ENCODE measurements at regions of chr2 and their contacts with region 1.

Region 1: DNA sequence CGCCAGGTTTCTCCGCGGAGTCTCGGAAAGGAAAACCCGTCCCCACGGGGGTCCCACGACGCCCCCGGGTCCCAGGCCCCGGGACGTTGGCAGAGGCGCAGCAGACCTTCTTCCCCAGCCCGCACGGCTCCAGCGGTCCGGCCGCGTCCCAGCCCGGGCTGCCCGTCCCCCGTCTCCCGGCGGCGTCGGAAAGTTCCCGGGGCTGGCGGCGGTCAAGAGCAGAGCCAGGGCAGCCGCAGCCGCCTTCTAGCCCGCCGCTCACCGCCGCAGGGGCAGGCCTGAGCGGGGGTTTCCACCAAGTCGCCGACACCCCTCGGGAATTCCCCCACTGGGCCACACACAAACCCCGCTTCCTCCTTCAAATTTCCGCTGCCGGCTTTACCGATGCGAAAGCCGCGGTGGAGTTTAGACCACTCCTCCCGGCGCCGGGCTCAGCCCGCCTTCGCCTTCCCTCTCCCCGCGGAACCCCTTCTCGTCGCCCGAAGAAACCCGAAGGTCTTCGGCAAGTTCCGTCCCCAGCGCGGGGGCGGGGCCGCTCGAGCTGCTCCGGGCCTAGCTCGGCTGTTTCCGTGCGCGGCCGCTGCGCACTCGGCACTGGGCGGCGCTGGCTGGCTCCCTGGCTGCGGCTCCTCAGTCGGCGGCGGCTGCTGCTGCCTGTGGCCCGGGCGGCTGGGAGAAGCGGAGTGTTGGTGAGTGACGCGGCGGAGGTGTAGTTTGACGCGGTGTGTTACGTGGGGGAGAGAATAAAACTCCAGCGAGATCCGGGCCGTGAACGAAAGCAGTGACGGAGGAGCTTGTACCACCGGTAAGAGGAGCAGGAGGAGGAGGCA is at the start of gene CREB1:
- DNase-seq: peak; percentile 99 to 100 (median 100)
- H3K4me3 ChIP-seq: peak within 1 kb of the TSS; percentile 86 to 89
- H3K4me3 Mint-ChIP-seq: peak within 1 kb of the TSS; percentile 96 to 99 (median 98)
- H3K27ac ChIP-seq: peak within 1 kb of the TSS; percentile 99
- H3K27ac Mint-ChIP-seq: peak within 1 kb of the TSS; percentile 98 to 100 (median 100)
- H3K4me1 ChIP-seq: peaks cover 75% of the 10 kb centered on the region
- H3K4me1 Mint-ChIP-seq: peaks cover 47 to 94% (median 59%) of the 10 kb centered on the region in 4 donors
- H3K27me3 ChIP-seq: no peaks in the 10 kb centered on the region
- H3K27me3 Mint-ChIP-seq: peaks cover 0 to 3% of the 10 kb centered on the region in 2 donors
- total RNA-seq, gene CREB1: 128 TPM

Region 2: DNA sequence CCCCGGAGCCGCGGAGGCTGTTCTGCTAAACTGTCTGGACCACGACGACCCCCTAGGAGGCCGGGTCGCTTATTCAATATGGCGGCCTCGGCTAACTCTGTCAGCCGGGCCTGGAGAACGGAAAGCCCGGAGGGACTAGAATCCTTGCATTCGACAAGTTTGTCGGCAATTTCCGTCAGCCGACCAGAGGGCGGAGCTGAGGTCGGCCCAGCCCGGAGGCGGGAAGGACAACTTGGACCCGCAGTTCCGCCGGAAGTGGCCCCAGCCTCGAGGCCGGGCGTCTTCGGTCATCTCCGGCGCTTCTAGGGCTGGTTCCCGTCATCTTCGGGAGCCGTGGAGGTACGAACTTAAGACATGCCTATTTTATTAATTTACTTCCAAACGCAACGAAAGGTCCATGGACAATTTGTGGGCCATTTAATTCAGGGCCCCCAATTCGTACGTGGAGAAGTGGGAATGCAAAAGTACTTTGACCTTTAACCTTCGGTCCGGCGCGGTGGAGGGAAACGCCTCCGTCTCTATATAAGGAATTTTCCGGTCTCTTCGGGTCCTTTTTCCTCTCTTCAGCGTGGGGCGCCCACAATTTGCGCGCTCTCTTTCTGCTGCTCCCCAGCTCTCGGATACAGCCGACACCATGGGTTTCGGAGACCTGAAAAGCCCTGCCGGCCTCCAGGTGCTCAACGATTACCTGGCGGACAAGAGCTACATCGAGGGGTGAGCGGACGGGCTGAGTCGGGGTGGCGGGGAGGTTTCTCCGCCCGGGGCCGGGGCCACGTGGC is 1370.0 kb before region 1 on chr2 and contains the starts of genes EEF1B2 and NDUFS1:
- CTCF ChIA-PET with region 1: no interaction called
- POLR2A ChIA-PET with region 1: no interaction called
- intact Hi-C with region 1: loop called (anchors 1 kb)
- DNase-seq: peak; percentile 96 to 97 (median 97)
- H3K4me3 ChIP-seq: peak within 1 kb of the TSS; percentile 69 to 78
- H3K4me3 Mint-ChIP-seq: peak within 1 kb of the TSS; percentile 97 to 100 (median 100)
- H3K27ac ChIP-seq: peak within 1 kb of the TSS; percentile 94
- H3K27ac Mint-ChIP-seq: peak within 1 kb of the TSS; percentile 98 to 100 (median 99)
- H3K4me1 ChIP-seq: peaks cover 47% of the 10 kb centered on the region
- H3K4me1 Mint-ChIP-seq: peaks cover 38 to 71% (median 56%) of the 10 kb centered on the region in 4 donors
- H3K27me3 ChIP-seq: no peaks in the 10 kb centered on the region
- H3K27me3 Mint-ChIP-seq: no peaks in the 10 kb centered on the region
- total RNA-seq, gene EEF1B2: 947 to 1,026 TPM
- total RNA-seq, gene NDUFS1: 53.4 to 57.6 TPM

Region 3: DNA sequence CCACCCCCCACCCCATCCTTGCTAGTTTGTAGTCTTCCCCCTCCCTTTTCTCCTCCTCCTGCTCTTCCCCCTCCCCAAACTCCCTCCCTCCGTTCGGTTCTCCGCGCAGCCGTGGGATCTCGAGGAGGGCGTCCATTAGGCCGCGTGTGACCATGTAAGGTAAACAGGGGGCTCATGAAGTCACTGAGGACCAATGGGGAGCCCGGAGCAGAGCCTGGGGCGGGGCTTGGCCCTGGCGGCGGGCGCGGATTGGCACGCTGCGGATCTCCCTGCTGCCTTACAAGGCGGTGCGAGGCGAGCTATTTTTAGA is 363.6 kb before region 1 on chr2:
- CTCF ChIA-PET with region 1: no interaction called
- POLR2A ChIA-PET with region 1: interaction called, 42 read pairs
- intact Hi-C with region 1: loop called (anchors 1 kb)
- DNase-seq: peak; percentile 90 to 97 (median 96)
- H3K4me3 ChIP-seq: peak overlapping the region; percentile 36 to 67
- H3K4me3 Mint-ChIP-seq: peak overlapping the region; percentile 89 to 99 (median 95)
- H3K27ac ChIP-seq: peak overlapping the region; percentile 97
- H3K27ac Mint-ChIP-seq: peak overlapping the region; percentile 91 to 98 (median 96)
- H3K4me1 ChIP-seq: peaks cover 40% of the 10 kb centered on the region
- H3K4me1 Mint-ChIP-seq: peaks cover 27 to 60% (median 40%) of the 10 kb centered on the region in 4 donors
- H3K27me3 ChIP-seq: no peaks in the 10 kb centered on the region
- H3K27me3 Mint-ChIP-seq: peaks cover 3 to 10% of the 10 kb centered on the region in 2 donors

Region 4: GRCh38 chr2:207491086-207491485 is 38.5 kb before region 1 on chr2:
- CTCF ChIA-PET with region 1: no interaction called
- POLR2A ChIA-PET with region 1: no interaction called
- intact Hi-C with region 1: no loop called
- DNase-seq: no peak
- H3K4me3 ChIP-seq: no peak overlapping the region
- H3K4me3 Mint-ChIP-seq: no peak overlapping the region
- H3K27ac ChIP-seq: no peak overlapping the region
- H3K27ac Mint-ChIP-seq: peak overlapping the region in 1 of 7 donors; percentile 47
- H3K4me1 ChIP-seq: no peaks in the 10 kb centered on the region
- H3K4me1 Mint-ChIP-seq: peaks cover 0 to 2% (median 0%) of the 10 kb centered on the region in 4 donors
- H3K27me3 ChIP-seq: no peaks in the 10 kb centered on the region
- H3K27me3 Mint-ChIP-seq: no peaks in the 10 kb centered on the region

Region 5: DNA sequence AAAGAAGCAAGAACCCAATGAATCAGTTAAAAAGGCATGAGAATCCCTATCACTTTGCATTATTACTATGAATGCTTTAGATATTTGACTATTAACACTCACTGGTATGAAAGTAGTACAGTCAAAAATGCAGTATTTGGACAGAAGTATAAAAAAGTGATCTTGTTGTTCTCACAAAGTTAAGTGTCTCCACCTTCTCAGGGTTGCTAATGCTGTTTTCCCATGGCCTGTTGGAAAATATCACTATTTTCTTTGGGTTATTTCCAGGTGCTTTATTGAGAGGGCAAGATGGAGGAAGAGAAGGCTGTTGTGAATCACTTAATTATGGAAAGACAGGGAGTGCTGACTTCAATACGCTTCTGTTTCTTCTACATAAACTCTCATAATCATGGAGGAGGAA is 13.3 kb before region 1 on chr2:
- CTCF ChIA-PET with region 1: interaction called, 4 read pairs
- POLR2A ChIA-PET with region 1: interaction called, 13 read pairs
- intact Hi-C with region 1: loop called (anchors 2 kb)
- DNase-seq: no peak
- H3K4me3 ChIP-seq: no peak overlapping the region
- H3K4me3 Mint-ChIP-seq: no peak overlapping the region
- H3K27ac ChIP-seq: no peak overlapping the region
- H3K27ac Mint-ChIP-seq: no peak overlapping the region
- H3K4me1 ChIP-seq: no peaks in the 10 kb centered on the region
- H3K4me1 Mint-ChIP-seq: peaks cover 4 to 7% (median 6%) of the 10 kb centered on the region in 4 donors
- H3K27me3 ChIP-seq: no peaks in the 10 kb centered on the region
- H3K27me3 Mint-ChIP-seq: no peaks in the 10 kb centered on the region

Region 6: DNA sequence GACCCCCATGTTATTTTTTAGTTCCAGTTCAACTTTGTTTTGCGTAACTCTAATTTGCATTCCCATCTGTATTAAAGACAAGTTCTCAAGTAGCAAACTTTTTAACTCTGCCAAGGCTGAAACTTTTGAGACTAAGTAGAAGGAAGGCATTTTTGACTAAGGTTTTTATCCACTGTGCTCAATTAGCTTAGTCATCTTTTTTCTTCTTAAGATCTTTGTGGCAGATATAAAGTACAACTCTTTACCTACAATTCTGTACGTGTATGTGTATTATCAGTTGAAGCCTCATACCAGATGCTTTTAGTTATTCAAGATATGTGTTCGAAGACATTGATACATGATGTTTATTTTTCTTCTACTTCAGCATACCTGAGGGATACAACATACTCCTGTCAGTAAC is 41.8 kb after region 1 on chr2:
- CTCF ChIA-PET with region 1: no interaction called
- POLR2A ChIA-PET with region 1: interaction called, 8 read pairs
- intact Hi-C with region 1: loop called (anchors 5 kb)
- DNase-seq: no peak
- H3K4me3 ChIP-seq: no peak overlapping the region
- H3K4me3 Mint-ChIP-seq: no peak overlapping the region
- H3K27ac ChIP-seq: no peak overlapping the region
- H3K27ac Mint-ChIP-seq: peak overlapping the region in 2 of 7 donors; percentile 26 to 51
- H3K4me1 ChIP-seq: no peaks in the 10 kb centered on the region
- H3K4me1 Mint-ChIP-seq: peaks cover 14 to 25% (median 20%) of the 10 kb centered on the region in 4 donors
- H3K27me3 ChIP-seq: no peaks in the 10 kb centered on the region
- H3K27me3 Mint-ChIP-seq: no peaks in the 10 kb centered on the region

Region 7: GRCh38 chr2:208025037-208025813 is 495.7 kb after region 1 on chr2 and contains the start of gene PLEKHM3:
- CTCF ChIA-PET with region 1: no interaction called
- POLR2A ChIA-PET with region 1: interaction called, 4 read pairs
- intact Hi-C with region 1: loop called (anchors 5 kb)
- DNase-seq: peak; percentile 43 to 69 (median 61)
- H3K4me3 ChIP-seq: peak within 1 kb of the TSS; percentile 83 to 92
- H3K4me3 Mint-ChIP-seq: peak within 1 kb of the TSS; percentile 90 to 98 (median 93)
- H3K27ac ChIP-seq: peak within 1 kb of the TSS; percentile 71
- H3K27ac Mint-ChIP-seq: peak within 1 kb of the TSS; percentile 45 to 96 (median 95)
- H3K4me1 ChIP-seq: peaks cover 14% of the 10 kb centered on the region
- H3K4me1 Mint-ChIP-seq: peaks cover 14 to 28% (median 19%) of the 10 kb centered on the region in 4 donors
- H3K27me3 ChIP-seq: no peaks in the 10 kb centered on the region
- H3K27me3 Mint-ChIP-seq: no peaks in the 10 kb centered on the region
- total RNA-seq, gene PLEKHM3: 14.7 to 16.1 TPM

Measured in CD4-positive, alpha-beta memory T cell (primary cell).